Panc1 (cell line): ENCODE measurements at regions of chr12 and their contacts with region 1.

Region 1: GRCh38 chr12:49609746-49610089 is 4.3 kb upstream of the FAM186B start:
- DNase-seq: no peak
- ATAC-seq: peak; percentile 68
- H3K4me3 ChIP-seq: no peak overlapping the region
- H3K27ac ChIP-seq: no peak overlapping the region
- H3K4me1 ChIP-seq: no peaks in the 10 kb centered on the region
- H3K27me3 ChIP-seq: no peaks in the 10 kb centered on the region
- CTCF ChIP-seq: no peak

Region 2: DNA sequence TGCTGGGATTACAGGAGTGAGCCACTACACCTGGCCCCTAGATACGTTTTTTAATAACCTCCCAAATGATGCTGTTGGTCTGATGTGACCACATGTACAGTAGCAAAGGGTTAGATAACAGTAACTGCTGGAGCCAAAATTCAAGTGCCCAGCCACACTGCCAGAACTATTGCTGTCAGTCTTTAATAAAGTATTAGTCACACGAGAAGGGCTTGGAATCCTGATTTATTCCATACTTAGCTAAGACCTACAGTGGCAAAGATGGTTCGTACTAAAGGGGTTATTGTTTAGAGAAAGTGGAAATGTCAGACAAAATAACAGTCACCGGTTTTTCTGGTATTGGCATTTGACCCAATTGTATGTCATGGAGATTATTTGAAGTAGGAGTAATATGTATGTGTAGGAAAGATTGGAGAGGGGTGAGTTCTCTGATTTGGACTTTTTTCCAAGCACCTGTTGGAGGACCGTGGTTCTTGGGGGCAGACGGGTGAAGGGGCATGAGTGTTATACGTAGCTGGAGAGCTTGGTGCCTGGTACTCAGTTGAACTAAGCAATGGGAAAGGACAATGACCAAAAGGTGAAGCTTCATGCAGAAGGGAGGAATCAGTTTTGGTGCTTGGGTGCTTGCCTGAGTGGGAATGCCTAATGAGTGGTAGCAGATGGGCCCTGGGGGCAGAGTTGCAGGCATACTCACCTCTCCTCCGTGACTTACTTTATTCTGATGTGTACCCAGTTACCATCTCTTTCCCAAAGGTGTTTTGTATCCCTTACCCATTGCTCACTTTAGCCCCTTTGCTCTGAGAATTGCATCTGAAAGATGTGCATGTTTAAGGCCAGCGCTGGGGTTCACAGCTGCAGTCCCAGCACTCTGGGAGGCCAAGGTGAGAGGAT is 335.1 kb before region 1 on chr12:
- CTCF ChIA-PET with region 1: interaction called, 11 read pairs
- POLR2A ChIA-PET with region 1: no interaction called
- in situ Hi-C with region 1: no loop called
- intact Hi-C with region 1: no loop called
- DNase-seq: no peak
- ATAC-seq: peak; percentile 30
- H3K4me3 ChIP-seq: no peak overlapping the region
- H3K27ac ChIP-seq: no peak overlapping the region
- H3K4me1 ChIP-seq: peaks cover 7% of the 10 kb centered on the region
- H3K27me3 ChIP-seq: no peaks in the 10 kb centered on the region
- CTCF ChIP-seq: no peak

Region 3: GRCh38 chr12:49673446-49674317 is 64.0 kb after region 1 on chr12:
- CTCF ChIA-PET with region 1: no interaction called
- POLR2A ChIA-PET with region 1: no interaction called
- in situ Hi-C with region 1: no loop called
- intact Hi-C with region 1: no loop called
- DNase-seq: no peak
- ATAC-seq: peak; percentile 54
- H3K4me3 ChIP-seq: no peak overlapping the region
- H3K27ac ChIP-seq: no peak overlapping the region
- H3K4me1 ChIP-seq: no peaks in the 10 kb centered on the region; the same call in 1 of the 2 replicates
- H3K27me3 ChIP-seq: no peaks in the 10 kb centered on the region
- CTCF ChIP-seq: no peak